ENCODE measurements at regions of chr9 and their contacts with region 1.

Region 1: DNA sequence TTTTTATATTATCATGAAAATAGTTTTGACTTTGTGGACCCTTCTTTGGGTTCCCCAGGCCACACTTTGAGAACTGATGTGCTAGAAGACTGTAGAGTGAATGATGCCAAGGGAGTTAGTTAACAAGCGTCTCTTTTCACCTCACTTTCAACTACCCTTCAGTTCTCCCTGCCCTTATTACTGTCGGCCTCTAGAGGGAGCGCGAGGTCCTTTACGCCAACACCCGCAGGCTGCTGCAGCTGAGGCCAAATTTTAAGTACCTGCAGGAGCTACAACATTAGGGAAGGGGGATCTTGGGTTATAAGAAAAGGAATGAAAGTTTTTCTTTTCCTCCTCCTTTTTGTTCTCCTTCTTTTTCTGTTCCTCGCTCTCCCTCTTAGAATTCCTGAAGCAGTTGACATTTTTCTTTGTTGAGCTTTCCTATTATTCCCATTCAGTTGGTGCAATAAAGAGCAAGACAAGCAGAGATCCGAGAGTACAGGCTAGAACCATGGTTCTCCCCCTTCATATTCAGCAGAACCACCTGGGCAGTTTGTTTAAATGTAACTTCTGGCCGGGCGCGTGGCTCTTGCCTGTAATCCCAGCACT is 84.0 kb downstream of the ZFAND5 start:
- DNase-seq: peak; percentile 69
- H3K4me3 ChIP-seq: no peak overlapping the region
- H3K27ac ChIP-seq: no peak overlapping the region
- H3K4me1 ChIP-seq: no peaks in the 10 kb centered on the region
- H3K27me3 ChIP-seq: peaks cover 4 to 5% of the 10 kb centered on the region in 2 experiments
- CTCF ChIP-seq: peak; percentile 85 to 92
- POLR2A ChIP-seq: no peak

Region 2: GRCh38 chr9:72038890-72039410 is 242.1 kb before region 1 on chr9:
- CTCF ChIA-PET with region 1: interaction called, 26 read pairs
- POLR2A ChIA-PET with region 1: no interaction called
- dilution Hi-C with region 1: no loop called
- intact Hi-C with region 1: no loop called
- DNase-seq: peak; percentile 74
- H3K4me3 ChIP-seq: no peak overlapping the region
- H3K27ac ChIP-seq: no peak overlapping the region
- H3K4me1 ChIP-seq: no peaks in the 10 kb centered on the region
- H3K27me3 ChIP-seq: no peaks in the 10 kb centered on the region
- CTCF ChIP-seq: peak; percentile 85 to 91
- POLR2A ChIP-seq: no peak

Region 3: DNA sequence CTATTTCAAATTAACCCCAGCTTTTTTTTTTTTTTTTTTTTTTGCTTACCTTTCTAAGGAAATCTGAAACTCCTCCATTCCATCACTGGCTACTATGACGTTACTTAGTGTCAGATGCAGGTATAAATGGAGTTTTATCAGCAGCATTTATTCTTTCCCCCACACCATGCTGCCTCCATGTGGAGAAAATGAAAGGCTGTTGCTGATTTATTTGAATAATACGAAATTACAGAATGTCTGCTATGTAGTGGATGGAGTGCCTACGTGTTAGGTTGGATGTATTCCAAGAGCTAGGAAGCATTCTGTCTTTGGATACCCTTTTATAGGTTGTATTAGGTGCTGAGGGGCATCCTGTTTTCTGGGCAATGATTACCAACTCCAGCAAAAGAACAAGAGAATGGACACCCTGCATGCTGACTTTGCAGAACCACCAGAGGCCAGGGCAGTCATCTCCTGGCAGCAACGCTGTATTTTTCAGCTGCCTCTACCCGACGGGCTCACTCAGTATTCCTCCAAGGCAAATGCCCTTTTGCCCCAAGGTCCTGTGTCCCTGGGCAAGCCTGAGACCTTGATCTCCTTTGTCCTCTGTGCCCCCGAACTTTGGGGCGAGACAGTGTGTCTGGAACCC is 472.4 kb after region 1 on chr9:
- CTCF ChIA-PET with region 1: interaction called, 77 read pairs
- POLR2A ChIA-PET with region 1: no interaction called
- dilution Hi-C with region 1: no loop called
- intact Hi-C with region 1: loop called (anchors 1 kb)
- DNase-seq: peak; percentile 10
- H3K4me3 ChIP-seq: no peak overlapping the region
- H3K27ac ChIP-seq: no peak overlapping the region
- H3K4me1 ChIP-seq: no peaks in the 10 kb centered on the region
- H3K27me3 ChIP-seq: peaks cover 2 to 3% of the 10 kb centered on the region in 2 experiments
- CTCF ChIP-seq: peak in 1 of 2 donors; percentile 16
- POLR2A ChIP-seq: no peak

Region 4: DNA sequence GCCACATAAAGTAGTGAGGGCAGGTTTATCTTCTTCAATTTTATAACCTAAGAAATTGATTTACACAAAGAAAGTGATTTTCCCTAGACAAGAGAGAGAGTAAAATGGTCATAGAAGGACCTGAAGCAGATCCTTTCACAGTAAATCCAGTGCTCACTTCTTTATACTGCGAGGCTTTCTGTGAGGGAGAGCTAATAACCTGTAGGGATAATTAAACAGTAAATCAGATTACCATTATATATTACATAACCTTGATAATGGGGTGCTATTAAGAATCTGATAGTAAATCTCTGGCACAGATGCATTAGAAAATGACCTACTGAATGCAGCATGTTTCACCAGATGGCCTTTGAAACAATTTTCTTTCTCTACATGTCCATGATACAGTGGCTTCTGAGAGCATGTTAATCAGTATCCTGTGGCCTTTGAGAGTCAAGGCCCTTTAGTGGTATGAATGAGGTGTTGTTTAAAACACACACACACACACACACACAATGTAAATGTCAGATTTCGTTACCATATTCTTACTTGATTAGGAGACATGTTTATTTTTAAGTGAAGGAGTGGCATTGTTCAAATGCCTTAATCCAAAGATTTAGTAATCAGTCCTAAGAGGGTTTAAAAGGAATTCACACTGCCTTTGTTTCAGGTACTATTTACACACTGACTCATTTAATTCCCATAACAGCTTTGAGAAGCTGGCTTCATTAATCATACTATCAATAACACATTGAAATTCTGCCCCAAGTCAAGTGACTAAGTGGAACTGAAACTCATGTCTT is 547.1 kb after region 1 on chr9:
- CTCF ChIA-PET with region 1: interaction called, 255 read pairs
- POLR2A ChIA-PET with region 1: no interaction called
- dilution Hi-C with region 1: no loop called
- intact Hi-C with region 1: no loop called
- DNase-seq: peak; percentile 42
- H3K4me3 ChIP-seq: no peak overlapping the region
- H3K27ac ChIP-seq: no peak overlapping the region
- H3K4me1 ChIP-seq: peaks cover 4% of the 10 kb centered on the region
- H3K27me3 ChIP-seq: no peaks in the 10 kb centered on the region
- CTCF ChIP-seq: no peak
- POLR2A ChIP-seq: no peak

Region 5: DNA sequence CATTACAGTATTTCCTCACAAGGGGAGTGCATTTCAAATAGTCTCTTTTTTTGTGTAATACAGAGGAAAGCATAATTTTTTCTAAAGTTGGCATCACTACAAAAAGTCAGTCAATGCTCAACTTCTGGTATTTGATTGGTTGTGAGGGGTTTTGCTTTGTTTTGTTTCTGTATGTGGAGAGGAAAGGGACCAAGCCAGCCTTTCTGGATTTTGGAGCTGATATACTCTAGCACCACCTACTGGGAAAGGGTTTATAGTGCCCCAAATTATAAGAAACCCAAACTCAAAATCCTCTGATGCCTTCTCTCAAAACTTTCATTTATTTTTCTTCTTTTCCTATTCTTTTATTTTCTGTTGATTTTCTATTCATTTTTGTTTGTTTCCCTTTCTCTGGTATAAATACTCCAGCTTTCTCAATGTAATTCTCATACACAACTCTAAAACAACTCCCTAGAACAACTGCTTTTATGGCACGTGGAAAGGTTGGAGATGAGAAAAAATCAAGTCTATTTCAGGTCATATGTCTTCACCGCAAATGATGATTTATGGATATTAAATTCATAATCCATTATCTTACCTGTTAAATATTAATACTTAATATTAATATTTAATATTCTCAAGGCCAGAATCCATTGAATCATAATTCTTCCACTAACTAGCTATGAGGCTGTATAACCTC is 801.1 kb after region 1 on chr9:
- CTCF ChIA-PET with region 1: no interaction called
- POLR2A ChIA-PET with region 1: no interaction called
- dilution Hi-C with region 1: no loop called
- intact Hi-C with region 1: loop called (anchors 2 kb)
- DNase-seq: peak; percentile 90
- H3K4me3 ChIP-seq: no peak overlapping the region
- H3K27ac ChIP-seq: no peak overlapping the region
- H3K4me1 ChIP-seq: peaks cover 2% of the 10 kb centered on the region
- H3K27me3 ChIP-seq: no peaks in the 10 kb centered on the region
- CTCF ChIP-seq: peak; percentile 61 to 74
- POLR2A ChIP-seq: no peak

Measured in endothelial cell of umbilical vein (primary cell).